ENCODE measurements at regions of chr6 and their contacts with region 1.

Region 1: GRCh38 chr6:45714741-45715507 is 300.7 kb downstream of the CLIC5 start:
- DNase-seq: peak; percentile 49
- H3K4me3 Mint-ChIP-seq: peak overlapping the region; percentile 28
- H3K27ac Mint-ChIP-seq: peak overlapping the region; percentile 94
- H3K4me1 Mint-ChIP-seq: peaks cover 79% of the 10 kb centered on the region
- H3K27me3 Mint-ChIP-seq: no peaks in the 10 kb centered on the region

Region 2: GRCh38 chr6:44475779-44476434 is 1239.0 kb before region 1 on chr6:
- intact Hi-C with region 1: loop called (anchors 10 kb)
- DNase-seq: peak; percentile 61
- H3K4me3 Mint-ChIP-seq: no peak overlapping the region
- H3K27ac Mint-ChIP-seq: no peak overlapping the region
- H3K4me1 Mint-ChIP-seq: no peaks in the 10 kb centered on the region
- H3K27me3 Mint-ChIP-seq: peaks cover 17% of the 10 kb centered on the region

Region 3: DNA sequence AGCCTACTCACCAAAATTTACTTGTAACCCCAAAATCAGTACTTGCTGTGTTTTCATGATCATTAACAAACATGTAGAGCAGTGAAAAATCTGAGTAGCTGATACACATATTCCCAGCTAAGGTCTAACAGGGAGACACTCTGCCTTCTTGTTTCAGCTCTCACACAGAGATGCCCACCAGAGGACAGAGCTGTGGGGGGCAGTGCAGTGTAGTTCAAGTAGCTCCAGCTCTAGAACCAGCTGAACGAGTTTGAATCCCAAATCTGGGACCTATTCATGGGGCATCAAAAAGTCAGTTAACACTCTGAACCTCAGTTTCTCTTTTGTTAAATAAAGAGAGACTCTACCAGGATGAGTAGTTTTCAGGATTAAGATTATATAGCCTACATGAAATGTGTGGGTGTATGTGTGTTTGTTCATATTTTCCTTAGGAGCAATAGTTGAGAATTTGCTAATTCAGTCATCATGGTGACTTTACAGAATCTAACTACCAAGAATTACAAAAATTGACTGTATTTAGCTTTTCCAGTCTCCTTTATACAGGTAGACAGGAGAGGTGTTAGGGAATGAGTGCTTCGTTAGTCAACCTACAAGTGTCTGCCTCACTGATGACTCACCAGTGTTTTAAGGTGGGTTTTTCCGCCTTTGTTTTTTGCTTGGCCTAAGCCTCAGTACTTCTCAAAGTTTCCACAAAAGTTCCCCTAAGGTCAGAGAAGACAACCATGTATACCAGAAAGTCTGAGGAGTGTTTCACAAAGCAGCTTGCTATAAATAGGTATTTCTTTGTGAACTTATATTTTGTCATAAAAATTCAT is 550.8 kb before region 1 on chr6:
- intact Hi-C with region 1: loop called (anchors 1 kb)
- DNase-seq: no peak
- H3K4me3 Mint-ChIP-seq: no peak overlapping the region
- H3K27ac Mint-ChIP-seq: peak overlapping the region; percentile 81
- H3K4me1 Mint-ChIP-seq: peaks cover 46% of the 10 kb centered on the region
- H3K27me3 Mint-ChIP-seq: no peaks in the 10 kb centered on the region

Region 4: GRCh38 chr6:45486736-45487135 is 228.2 kb before region 1 on chr6:
- intact Hi-C with region 1: loop called (anchors 2 kb)
- DNase-seq: no peak
- H3K4me3 Mint-ChIP-seq: peak overlapping the region; percentile 20
- H3K27ac Mint-ChIP-seq: peak overlapping the region; percentile 74
- H3K4me1 Mint-ChIP-seq: peaks cover 78% of the 10 kb centered on the region
- H3K27me3 Mint-ChIP-seq: no peaks in the 10 kb centered on the region

Region 5: DNA sequence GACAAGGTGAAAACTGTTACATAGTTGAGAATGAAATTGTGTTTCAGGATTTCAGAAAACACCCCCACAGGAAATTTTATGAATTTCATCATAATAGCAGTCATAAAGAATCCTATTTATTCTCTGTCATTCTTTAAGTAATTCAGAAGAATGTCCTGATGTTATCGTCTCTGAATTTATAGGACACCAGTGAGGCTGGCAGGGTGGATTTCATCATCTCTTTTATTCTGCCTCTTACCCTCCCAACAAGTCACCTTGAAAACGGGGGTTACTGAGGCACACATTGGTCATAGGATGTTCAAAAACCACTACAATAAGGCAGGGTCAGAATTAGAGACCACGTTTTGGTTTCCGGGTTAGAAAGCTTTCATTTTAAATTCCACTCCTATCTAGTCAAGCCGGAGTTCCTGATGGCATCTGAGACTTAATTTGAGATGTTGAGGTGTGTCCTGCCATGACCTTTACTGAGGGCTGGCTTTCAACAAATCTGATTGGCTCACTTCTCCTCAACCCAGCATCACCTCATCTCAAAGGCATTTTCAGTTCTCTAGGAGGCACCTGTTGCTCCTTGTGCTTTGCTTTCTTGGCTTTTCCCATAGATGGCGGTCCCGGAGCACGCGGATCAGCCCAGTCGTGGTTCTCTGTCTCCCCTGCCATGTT is 106.5 kb before region 1 on chr6:
- intact Hi-C with region 1: loop called (anchors 5 kb)
- DNase-seq: no peak
- H3K4me3 Mint-ChIP-seq: no peak overlapping the region
- H3K27ac Mint-ChIP-seq: peak overlapping the region; percentile 78
- H3K4me1 Mint-ChIP-seq: peaks cover 48% of the 10 kb centered on the region
- H3K27me3 Mint-ChIP-seq: no peaks in the 10 kb centered on the region

Region 6: DNA sequence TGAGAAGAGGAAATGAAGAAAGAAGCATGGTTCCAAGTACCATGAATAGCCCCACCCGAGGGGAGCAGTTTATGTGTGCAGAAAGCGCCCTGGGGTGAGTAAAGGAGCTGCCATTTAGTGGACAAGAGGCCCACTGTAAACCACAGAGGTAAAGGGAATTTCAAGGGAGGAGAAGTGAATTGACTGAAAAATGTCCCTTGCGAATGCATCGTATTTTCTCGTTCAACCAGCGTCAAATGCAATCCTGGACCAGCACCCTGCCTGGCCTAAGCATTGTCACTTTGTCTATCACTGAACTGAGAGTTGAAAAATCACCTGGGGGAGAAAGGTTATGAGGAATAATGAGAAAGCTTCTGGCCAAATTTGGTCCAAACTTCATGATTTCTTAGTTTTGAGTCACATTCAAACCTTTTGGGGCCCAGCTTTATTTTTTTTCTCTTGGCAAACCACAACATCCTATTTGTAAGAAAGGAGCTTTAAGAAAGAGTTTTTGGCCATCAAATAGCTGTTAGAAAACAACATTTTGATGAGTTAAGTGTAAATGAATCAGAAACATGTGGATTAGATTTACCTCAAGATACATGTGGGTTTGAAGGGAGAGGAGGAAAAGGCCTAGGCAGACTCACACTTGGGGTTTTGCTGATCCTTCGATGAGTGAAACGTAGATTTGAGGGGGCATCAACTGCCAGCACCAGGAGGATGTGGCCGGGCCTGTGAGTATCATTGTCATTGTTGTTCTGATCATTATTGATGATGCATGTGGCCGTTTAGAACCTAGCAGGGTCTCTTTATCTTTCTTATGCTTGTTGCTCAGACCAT is 86.8 kb after region 1 on chr6:
- intact Hi-C with region 1: loop called (anchors 1 kb)
- DNase-seq: peak; percentile 55
- H3K4me3 Mint-ChIP-seq: no peak overlapping the region
- H3K27ac Mint-ChIP-seq: peak overlapping the region; percentile 88
- H3K4me1 Mint-ChIP-seq: peaks cover 36% of the 10 kb centered on the region
- H3K27me3 Mint-ChIP-seq: no peaks in the 10 kb centered on the region

Measured in activated T-helper 2 cell treated with anti-CD3 and anti-CD28 coated beads, Interferon-gamma antibody, Interleukin-2, Interleukin-4, amounts not matched to agents 10 μg/mL and 5 μg/mL and 100 μg/mL, durations not matched to agents 14 hours and 24 hours and 36 hours (primary cell).